ENCODE measurements at regions of chr2 and their contacts with region 1.

Region 1: GRCh38 chr2:189661148-189661956 is at the start of gene ASNSD1:
- DNase-seq: peak; percentile 99
- H3K4me3 Mint-ChIP-seq: no peak within 1 kb of the TSS
- H3K27ac Mint-ChIP-seq: no peak within 1 kb of the TSS
- H3K4me1 Mint-ChIP-seq: peaks cover 5% of the 10 kb centered on the region
- H3K27me3 Mint-ChIP-seq: no peaks in the 10 kb centered on the region
- CTCF ChIP-seq: peak; percentile 87
- total RNA-seq, gene ASNSD1: 29.8 and 41.4 TPM in 2 replicates

Region 2: DNA sequence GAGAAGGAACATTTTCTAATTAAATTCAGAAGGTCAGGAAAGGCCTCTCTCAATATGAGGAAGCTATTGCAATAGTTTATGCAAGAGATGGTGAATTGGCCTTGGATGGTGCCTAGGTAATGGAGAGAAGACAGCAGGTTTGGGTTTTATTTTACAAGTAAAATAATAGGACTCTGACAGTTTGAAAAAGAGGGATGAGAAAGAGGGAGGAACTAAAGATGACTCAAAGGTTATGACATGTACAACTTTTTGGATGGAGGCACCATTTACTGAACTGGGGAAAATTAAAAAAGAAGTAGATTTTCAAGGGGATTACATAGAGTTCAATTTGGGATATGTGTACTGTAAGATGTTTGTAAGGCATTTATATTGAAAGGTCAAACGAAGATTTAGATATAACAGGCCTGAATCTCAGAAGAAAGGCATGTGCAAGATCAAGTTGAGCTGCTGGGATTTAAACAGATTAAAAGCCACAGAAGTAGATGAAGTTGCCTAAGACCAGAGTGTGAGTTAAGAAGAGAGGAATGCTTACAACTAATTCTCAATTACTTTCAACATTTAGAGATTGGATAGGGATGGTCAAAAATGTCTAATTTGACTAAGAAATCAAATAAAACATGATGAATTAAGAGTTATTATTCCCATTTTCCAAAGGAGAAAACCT is 12.4 kb before region 1 on chr2:
- CTCF ChIA-PET with region 1: interaction called, 42 read pairs
- POLR2A ChIA-PET with region 1: interaction called, 4 read pairs
- intact Hi-C with region 1: no loop called
- DNase-seq: no peak
- H3K4me3 Mint-ChIP-seq: no peak overlapping the region
- H3K27ac Mint-ChIP-seq: no peak overlapping the region
- H3K4me1 Mint-ChIP-seq: no peaks in the 10 kb centered on the region
- H3K27me3 Mint-ChIP-seq: no peaks in the 10 kb centered on the region
- CTCF ChIP-seq: no peak

Region 3: GRCh38 chr2:189698020-189698887 is 36.9 kb after region 1 on chr2:
- CTCF ChIA-PET with region 1: interaction called, 83 read pairs
- POLR2A ChIA-PET with region 1: interaction called, 18 read pairs
- intact Hi-C with region 1: loop called (anchors 1 kb)
- DNase-seq: peak; percentile 54
- H3K4me3 Mint-ChIP-seq: no peak overlapping the region
- H3K27ac Mint-ChIP-seq: no peak overlapping the region
- H3K4me1 Mint-ChIP-seq: no peaks in the 10 kb centered on the region
- H3K27me3 Mint-ChIP-seq: no peaks in the 10 kb centered on the region
- CTCF ChIP-seq: peak; percentile 45

Region 4: DNA sequence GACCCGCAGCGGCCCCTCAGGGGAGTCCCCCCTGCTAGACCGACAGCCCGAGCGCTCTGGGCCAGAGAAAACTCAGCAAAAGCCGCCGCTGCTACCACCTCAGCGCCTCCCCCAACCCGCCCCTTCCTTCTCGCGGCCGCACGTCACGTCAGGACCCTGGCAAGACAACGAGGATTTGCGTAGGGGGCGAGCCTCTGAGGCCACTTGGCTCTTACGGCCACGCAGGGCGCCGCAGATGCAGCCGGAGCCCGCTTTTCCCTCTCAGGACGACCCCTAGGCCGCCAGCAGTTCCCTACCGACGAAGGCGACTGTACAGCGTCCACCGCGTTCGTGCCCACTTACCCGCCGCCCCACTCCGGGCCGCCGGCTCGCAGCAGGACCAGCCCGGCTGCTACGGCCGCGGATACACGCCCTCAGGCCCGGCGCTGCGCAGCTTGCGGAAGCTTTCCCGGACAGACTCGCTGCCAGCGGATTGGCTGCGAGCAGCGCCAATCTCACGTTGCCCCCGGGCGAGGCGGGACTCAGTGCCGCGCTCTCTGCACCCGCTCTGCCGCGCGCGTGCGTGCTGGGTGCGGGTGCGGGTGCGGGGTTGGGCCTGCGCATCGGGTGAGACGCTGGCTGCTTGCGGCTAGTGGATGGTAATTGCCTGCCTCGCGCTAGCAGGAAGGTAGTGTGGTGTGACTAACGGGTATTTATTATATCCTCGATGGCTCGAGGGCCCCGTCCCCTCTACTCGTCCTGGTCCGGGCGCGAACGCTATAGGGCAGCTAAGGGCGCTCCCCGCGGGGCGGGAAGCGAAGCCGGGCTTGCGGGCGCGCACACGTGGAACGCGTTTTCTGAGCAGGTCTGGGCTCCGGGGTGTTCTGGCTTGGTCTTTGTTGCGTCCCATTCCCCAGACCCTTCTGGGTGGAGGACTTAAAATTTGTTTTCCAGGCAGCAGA is 122.8 kb after region 1 on chr2 and contains the starts of genes ORMDL1 and PMS1:
- CTCF ChIA-PET with region 1: interaction called, 4 read pairs
- POLR2A ChIA-PET with region 1: interaction called, 11 read pairs
- intact Hi-C with region 1: loop called (anchors 5 kb)
- DNase-seq: peak; percentile 94
- H3K4me3 Mint-ChIP-seq: peak within 1 kb of the TSS; percentile 90
- H3K27ac Mint-ChIP-seq: peak within 1 kb of the TSS; percentile 73
- H3K4me1 Mint-ChIP-seq: peaks cover 41% of the 10 kb centered on the region
- H3K27me3 Mint-ChIP-seq: no peaks in the 10 kb centered on the region
- CTCF ChIP-seq: no peak
- total RNA-seq, gene ORMDL1: 83.0 and 85.1 TPM in 2 replicates
- total RNA-seq, gene PMS1: 38.3 and 50.9 TPM in 2 replicates

Region 5: GRCh38 chr2:189874586-189875320 is 213.4 kb after region 1 on chr2:
- CTCF ChIA-PET with region 1: no interaction called
- POLR2A ChIA-PET with region 1: no interaction called
- intact Hi-C with region 1: no loop called
- DNase-seq: no peak
- H3K4me3 Mint-ChIP-seq: no peak overlapping the region
- H3K27ac Mint-ChIP-seq: no peak overlapping the region
- H3K4me1 Mint-ChIP-seq: peaks cover 6% of the 10 kb centered on the region
- H3K27me3 Mint-ChIP-seq: no peaks in the 10 kb centered on the region
- CTCF ChIP-seq: no peak

Region 6: DNA sequence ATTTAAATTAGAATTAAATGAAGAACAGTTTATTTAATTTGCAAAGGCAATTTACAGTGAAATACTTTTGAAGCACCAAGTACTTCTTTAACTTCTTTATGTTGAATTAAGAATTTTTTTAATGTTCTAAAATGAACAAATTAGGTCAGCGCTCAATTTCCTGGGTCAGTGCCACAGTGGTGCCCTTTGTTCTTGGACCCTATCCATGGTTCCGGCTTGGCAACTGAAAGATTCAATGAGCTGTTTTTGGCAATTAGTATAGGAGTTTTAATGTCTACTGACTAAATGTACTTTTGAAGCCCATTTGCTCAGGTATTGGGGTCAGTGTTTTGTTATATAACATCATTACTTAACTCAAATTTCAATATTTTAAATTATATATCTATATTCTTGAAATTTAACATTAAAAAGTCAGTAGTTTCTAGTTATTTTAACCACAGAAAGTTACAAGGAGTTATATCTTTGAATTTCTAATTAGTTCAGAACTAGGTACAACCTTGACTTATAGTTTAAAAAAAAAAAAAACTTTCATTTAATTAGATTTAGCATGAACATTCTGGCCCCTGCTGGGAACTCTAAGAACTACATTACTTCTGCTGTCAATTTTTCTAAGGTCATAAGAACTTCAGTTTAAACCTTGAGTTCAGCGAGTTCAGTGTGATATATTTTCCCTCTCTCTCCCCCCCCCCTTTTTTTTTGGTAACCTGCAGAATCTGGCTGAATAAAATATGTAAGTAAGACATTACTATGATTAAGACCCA is 408.8 kb after region 1 on chr2:
- CTCF ChIA-PET with region 1: interaction called, 4 read pairs
- POLR2A ChIA-PET with region 1: no interaction called
- intact Hi-C with region 1: loop called (anchors 2 kb)
- DNase-seq: peak; percentile 66
- H3K4me3 Mint-ChIP-seq: no peak overlapping the region
- H3K27ac Mint-ChIP-seq: no peak overlapping the region
- H3K4me1 Mint-ChIP-seq: no peaks in the 10 kb centered on the region
- H3K27me3 Mint-ChIP-seq: no peaks in the 10 kb centered on the region
- CTCF ChIP-seq: peak; percentile 60

Measured in MCF 10A (cell line).